Endothelial cell of umbilical vein (primary cell): ENCODE measurements at regions of chr11 and their contacts with region 1.

Region 1: DNA sequence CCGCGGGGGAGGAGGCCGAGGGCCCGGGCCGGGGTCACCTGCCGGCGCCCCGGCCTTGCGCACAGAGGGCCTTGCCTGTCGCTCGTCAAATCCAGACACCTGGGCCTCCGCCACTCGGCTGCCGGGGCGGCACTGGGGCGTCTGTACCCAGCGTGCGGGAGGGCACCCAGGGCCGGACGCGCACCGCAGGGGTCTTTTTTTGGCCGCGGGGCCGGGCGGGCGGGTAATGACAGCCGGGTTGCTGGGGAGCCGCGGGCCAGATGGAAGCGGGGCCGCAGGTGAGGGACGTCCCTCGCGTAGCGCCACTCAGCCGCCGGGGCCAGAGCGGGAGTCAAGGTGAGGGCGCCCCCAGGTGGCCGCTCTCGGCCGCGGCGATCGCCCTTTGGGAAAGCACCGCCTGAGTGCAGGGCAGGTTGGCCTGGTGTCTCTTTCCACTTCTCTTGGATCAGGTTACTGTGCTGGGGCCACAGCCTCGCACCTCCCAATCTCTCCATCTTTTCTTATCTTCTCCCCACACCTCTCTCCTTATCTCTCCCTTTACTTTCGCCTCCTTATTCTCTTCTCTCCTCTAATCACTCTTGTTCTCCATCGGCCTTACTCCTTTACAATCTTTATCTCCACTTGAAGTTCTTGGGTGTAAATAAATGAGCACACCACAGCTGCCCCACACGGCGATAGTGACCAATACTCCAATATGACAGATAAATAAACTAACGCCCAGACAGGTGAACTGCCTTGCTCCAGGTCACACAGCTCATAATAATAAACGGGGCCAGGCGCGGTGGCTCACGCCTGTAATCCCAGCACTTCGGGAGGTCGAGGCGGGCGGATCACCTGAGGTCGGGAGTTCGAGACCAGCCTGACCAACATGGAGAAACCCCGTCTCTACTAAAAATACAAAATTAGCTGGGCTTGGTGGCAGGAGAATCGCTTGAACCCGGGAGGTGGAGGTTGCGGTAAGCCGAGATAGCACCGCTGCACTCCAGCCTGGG is 3.7 kb downstream of the PHLDB1 start:
- DNase-seq: peak; percentile 78
- H3K4me3 ChIP-seq: peak overlapping the region; percentile 39 to 60 (median 59)
- H3K27ac ChIP-seq: peak overlapping the region; percentile 80
- H3K4me1 ChIP-seq: peaks cover 51% of the 10 kb centered on the region
- H3K27me3 ChIP-seq: no peaks in the 10 kb centered on the region
- CTCF ChIP-seq: peak; percentile 82 to 98
- POLR2A ChIP-seq: no peak

Region 2: GRCh38 chr11:118263695-118264567 is 347.2 kb before region 1 on chr11 and contains the start of gene MPZL2:
- CTCF ChIA-PET with region 1: no interaction called
- POLR2A ChIA-PET with region 1: no interaction called
- dilution Hi-C with region 1: no loop called
- intact Hi-C with region 1: no loop called
- DNase-seq: peak; percentile 57
- H3K4me3 ChIP-seq: peak within 1 kb of the TSS; percentile 13 to 69 (median 44)
- H3K27ac ChIP-seq: peak within 1 kb of the TSS; percentile 4
- H3K4me1 ChIP-seq: peaks cover 51% of the 10 kb centered on the region
- H3K27me3 ChIP-seq: no peaks in the 10 kb centered on the region
- CTCF ChIP-seq: no peak
- POLR2A ChIP-seq: peak; percentile 68
- total RNA-seq, gene MPZL2: 37.1 and 49.5 TPM in 2 replicates

Region 3: DNA sequence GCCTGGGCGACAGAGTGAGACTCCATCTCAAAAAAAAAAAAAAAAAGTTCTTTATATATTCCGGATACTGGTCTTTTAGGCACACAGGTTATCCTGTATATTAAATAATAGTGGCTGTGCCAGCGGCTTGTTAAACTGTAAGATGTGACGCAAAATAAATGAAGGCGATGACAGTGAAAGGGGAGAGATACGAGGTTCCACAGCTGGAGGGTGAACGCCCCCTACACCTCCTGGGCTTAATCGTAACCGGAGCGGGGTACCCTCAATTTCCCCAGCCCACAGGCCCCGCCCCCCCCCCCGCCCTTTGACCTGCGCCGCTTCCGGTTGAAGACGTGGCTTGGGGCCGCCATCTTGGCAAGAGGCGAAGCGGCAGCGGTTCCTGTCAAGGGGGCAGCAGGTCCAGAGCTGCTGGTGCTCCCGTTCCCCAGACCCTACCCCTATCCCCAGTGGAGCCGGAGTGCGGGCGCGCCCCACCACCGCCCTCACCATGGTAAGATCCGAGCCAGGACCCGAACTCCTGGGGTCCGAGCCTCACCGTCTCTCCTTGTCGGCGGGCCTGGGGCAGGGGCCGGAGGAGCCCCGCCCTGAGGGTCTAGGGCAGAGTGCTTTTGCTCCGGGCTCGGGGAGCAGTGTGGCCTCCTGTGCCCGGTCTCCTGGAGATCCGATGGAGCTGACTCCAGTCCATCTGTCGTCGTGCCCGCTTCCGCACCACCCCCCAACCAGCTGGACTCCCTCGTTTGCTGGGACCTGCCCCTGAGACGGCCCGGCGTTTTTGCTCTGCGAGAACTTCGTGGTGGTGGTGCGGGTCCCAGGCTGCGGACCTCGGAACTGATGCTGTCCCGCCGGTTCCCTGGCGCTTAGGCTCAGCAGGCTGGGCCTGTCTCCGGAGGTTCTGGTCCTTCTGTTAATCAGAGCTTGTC is 38.8 kb before region 1 on chr11 and contains the start of gene ARCN1:
- CTCF ChIA-PET with region 1: interaction called, 4 read pairs
- POLR2A ChIA-PET with region 1: no interaction called
- dilution Hi-C with region 1: no loop called
- intact Hi-C with region 1: loop called (anchors 1 kb)
- DNase-seq: peak; percentile 74
- H3K4me3 ChIP-seq: peak within 1 kb of the TSS; percentile 59 to 99 (median 90)
- H3K27ac ChIP-seq: peak within 1 kb of the TSS; percentile 87
- H3K4me1 ChIP-seq: peaks cover 19% of the 10 kb centered on the region
- H3K27me3 ChIP-seq: no peaks in the 10 kb centered on the region
- CTCF ChIP-seq: no peak
- POLR2A ChIP-seq: peak; percentile 92
- total RNA-seq, gene ARCN1: 168 and 172 TPM in 2 replicates

Region 4: GRCh38 chr11:118592616-118593367 is 18.3 kb before region 1 on chr11:
- CTCF ChIA-PET with region 1: interaction called, 82 read pairs
- POLR2A ChIA-PET with region 1: interaction called, 6 read pairs
- dilution Hi-C with region 1: no loop called
- intact Hi-C with region 1: loop called (anchors 1 kb)
- DNase-seq: no peak
- H3K4me3 ChIP-seq: no peak overlapping the region
- H3K27ac ChIP-seq: no peak overlapping the region
- H3K4me1 ChIP-seq: no peaks in the 10 kb centered on the region
- H3K27me3 ChIP-seq: no peaks in the 10 kb centered on the region
- CTCF ChIP-seq: no peak
- POLR2A ChIP-seq: no peak

Region 5: GRCh38 chr11:118634431-118635236 is 23.5 kb after region 1 on chr11:
- CTCF ChIA-PET with region 1: interaction called, 8 read pairs
- POLR2A ChIA-PET with region 1: no interaction called
- dilution Hi-C with region 1: no loop called
- intact Hi-C with region 1: loop called (anchors 2 kb)
- DNase-seq: no peak
- H3K4me3 ChIP-seq: no peak overlapping the region
- H3K27ac ChIP-seq: no peak overlapping the region
- H3K4me1 ChIP-seq: no peaks in the 10 kb centered on the region
- H3K27me3 ChIP-seq: no peaks in the 10 kb centered on the region
- CTCF ChIP-seq: no peak
- POLR2A ChIP-seq: no peak

Region 6: GRCh38 chr11:118791111-118791965 is 180.2 kb after region 1 on chr11 and contains the start of gene DDX6:
- CTCF ChIA-PET with region 1: no interaction called
- POLR2A ChIA-PET with region 1: no interaction called
- dilution Hi-C with region 1: no loop called
- intact Hi-C with region 1: loop called (anchors 5 kb)
- DNase-seq: peak; percentile 86
- H3K4me3 ChIP-seq: peak within 1 kb of the TSS; percentile 70 to 87 (median 84)
- H3K27ac ChIP-seq: peak within 1 kb of the TSS; percentile 89
- H3K4me1 ChIP-seq: peaks cover 21% of the 10 kb centered on the region
- H3K27me3 ChIP-seq: no peaks in the 10 kb centered on the region
- CTCF ChIP-seq: peak; percentile 7 to 38
- POLR2A ChIP-seq: no peak
- total RNA-seq, gene DDX6: 132 and 138 TPM in 2 replicates